ENCODE measurements at regions of chr9 and their contacts with region 1.

Region 1: GRCh38 chr9:71361357-71361756 is 239.9 kb upstream of the TRPM3 start:
- DNase-seq: no peak
- ATAC-seq: no peak
- H3K4me3 ChIP-seq: no peak overlapping the region
- H3K27ac ChIP-seq: no peak overlapping the region
- H3K4me1 ChIP-seq: no peaks in the 10 kb centered on the region
- H3K27me3 ChIP-seq: no peaks in the 10 kb centered on the region
- CTCF ChIP-seq: no peak

Region 2: GRCh38 chr9:71431931-71432330 is 70.6 kb after region 1 on chr9:
- CTCF ChIA-PET with region 1: interaction called, 13 read pairs
- POLR2A ChIA-PET with region 1: no interaction called
- in situ Hi-C with region 1: no loop called
- intact Hi-C with region 1: no loop called
- DNase-seq: no peak
- ATAC-seq: no peak
- H3K4me3 ChIP-seq: no peak overlapping the region
- H3K27ac ChIP-seq: no peak overlapping the region
- H3K4me1 ChIP-seq: no peaks in the 10 kb centered on the region
- H3K27me3 ChIP-seq: no peaks in the 10 kb centered on the region
- CTCF ChIP-seq: no peak